ENCODE measurements at regions of chr16 and their contacts with region 1.

Region 1: GRCh38 chr16:27235055-27235937 is 32.0 kb downstream of the KDM8 start:
- DNase-seq: peak; percentile 97
- H3K4me3 Mint-ChIP-seq: peak overlapping the region; percentile 65
- H3K27ac Mint-ChIP-seq: peak overlapping the region; percentile 100
- H3K4me1 Mint-ChIP-seq: peaks cover 90% of the 10 kb centered on the region
- H3K27me3 Mint-ChIP-seq: no peaks in the 10 kb centered on the region

Region 2: GRCh38 chr16:26598061-26598460 is 637.2 kb before region 1 on chr16:
- intact Hi-C with region 1: loop called (anchors 10 kb)
- DNase-seq: peak; percentile 94
- H3K4me3 Mint-ChIP-seq: peak overlapping the region; percentile 66
- H3K27ac Mint-ChIP-seq: peak overlapping the region; percentile 96
- H3K4me1 Mint-ChIP-seq: peaks cover 67% of the 10 kb centered on the region
- H3K27me3 Mint-ChIP-seq: no peaks in the 10 kb centered on the region

Region 3: DNA sequence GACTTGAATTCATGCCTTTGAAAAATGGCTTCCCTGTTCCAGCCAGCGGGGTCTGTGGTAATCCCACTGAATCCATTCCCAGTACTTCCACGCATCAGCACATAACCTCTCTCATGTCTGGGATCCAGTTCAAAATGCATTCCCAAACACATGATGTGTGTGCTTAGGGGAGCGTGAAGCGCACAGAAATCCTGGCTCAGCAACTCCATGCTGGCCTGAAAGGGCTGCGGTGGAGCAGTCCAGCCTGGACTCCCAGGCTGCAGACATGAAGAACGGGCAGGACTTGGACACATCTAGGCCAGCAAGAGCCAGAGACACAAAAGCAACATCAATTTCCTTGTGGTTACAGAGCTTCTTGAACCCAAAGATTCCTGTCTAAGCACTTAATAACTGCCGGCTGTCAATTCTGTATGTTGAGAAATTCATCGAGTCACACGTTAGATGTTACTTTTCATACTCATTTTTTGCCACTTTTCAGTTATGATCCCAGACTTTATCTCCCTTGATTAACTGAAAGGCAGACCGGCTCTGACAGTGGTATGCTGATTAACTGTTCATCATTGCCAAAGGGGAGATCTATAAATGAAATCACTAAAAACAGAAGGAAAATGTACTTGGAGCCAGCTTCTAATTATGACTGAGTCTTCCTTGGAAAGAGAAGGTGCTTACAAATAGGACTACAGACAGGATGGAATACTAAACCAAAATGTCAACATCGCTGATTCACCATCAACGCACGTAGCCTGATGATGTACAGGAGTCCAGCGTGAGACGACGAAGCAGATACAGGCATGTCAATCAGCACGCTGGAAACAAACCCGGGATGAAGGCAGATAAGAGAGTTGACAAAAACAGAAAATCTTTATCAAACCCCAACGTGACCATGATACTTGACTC is 10.2 kb after region 1 on chr16:
- intact Hi-C with region 1: loop called (anchors 1 kb)
- DNase-seq: peak; percentile 80
- H3K4me3 Mint-ChIP-seq: peak overlapping the region; percentile 37
- H3K27ac Mint-ChIP-seq: peak overlapping the region; percentile 86
- H3K4me1 Mint-ChIP-seq: peaks cover 76% of the 10 kb centered on the region
- H3K27me3 Mint-ChIP-seq: no peaks in the 10 kb centered on the region

Region 4: GRCh38 chr16:27273670-27274423 is 38.6 kb after region 1 on chr16:
- intact Hi-C with region 1: loop called (anchors 1 kb)
- DNase-seq: peak; percentile 83
- H3K4me3 Mint-ChIP-seq: peak overlapping the region; percentile 68
- H3K27ac Mint-ChIP-seq: peak overlapping the region; percentile 94
- H3K4me1 Mint-ChIP-seq: peaks cover 59% of the 10 kb centered on the region
- H3K27me3 Mint-ChIP-seq: no peaks in the 10 kb centered on the region

Region 5: GRCh38 chr16:27367461-27368357 is 132.4 kb after region 1 on chr16:
- intact Hi-C with region 1: loop called (anchors 1 kb)
- DNase-seq: peak; percentile 94
- H3K4me3 Mint-ChIP-seq: peak overlapping the region; percentile 69
- H3K27ac Mint-ChIP-seq: peak overlapping the region; percentile 99
- H3K4me1 Mint-ChIP-seq: peaks cover 52% of the 10 kb centered on the region
- H3K27me3 Mint-ChIP-seq: no peaks in the 10 kb centered on the region

Region 6: DNA sequence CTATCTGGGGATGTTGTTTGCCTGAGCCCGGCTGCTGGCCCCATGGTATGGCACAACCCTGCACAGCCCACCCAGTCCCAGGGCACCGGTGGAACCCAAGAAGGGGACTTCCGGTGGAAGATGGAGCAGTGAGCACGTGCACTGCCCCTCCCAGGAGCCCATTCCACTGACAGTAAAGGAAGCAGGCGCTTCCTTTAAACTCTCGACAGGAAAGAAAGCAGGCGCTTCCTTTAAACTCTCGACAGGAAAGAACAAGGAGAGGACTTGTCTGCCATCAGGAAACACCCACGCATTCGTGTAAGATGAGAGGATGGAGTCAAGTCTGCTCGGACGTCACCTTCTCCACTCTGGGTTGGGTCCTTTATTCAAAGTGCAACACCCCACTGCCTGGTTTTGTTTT is 220.4 kb after region 1 on chr16:
- intact Hi-C with region 1: loop called (anchors 2 kb)
- DNase-seq: peak; percentile 70
- H3K4me3 Mint-ChIP-seq: peak overlapping the region; percentile 27
- H3K27ac Mint-ChIP-seq: peak overlapping the region; percentile 76
- H3K4me1 Mint-ChIP-seq: peaks cover 46% of the 10 kb centered on the region
- H3K27me3 Mint-ChIP-seq: no peaks in the 10 kb centered on the region

Measured in activated CD4-positive, alpha-beta T cell treated with anti-CD3 and anti-CD28 coated beads, Interleukin-2, amount 10 ng/mL, durations not matched to agents 24 days and 14 days (primary cell).